ENCODE measurements at regions of chr17 and their contacts with region 1.

Region 1: DNA sequence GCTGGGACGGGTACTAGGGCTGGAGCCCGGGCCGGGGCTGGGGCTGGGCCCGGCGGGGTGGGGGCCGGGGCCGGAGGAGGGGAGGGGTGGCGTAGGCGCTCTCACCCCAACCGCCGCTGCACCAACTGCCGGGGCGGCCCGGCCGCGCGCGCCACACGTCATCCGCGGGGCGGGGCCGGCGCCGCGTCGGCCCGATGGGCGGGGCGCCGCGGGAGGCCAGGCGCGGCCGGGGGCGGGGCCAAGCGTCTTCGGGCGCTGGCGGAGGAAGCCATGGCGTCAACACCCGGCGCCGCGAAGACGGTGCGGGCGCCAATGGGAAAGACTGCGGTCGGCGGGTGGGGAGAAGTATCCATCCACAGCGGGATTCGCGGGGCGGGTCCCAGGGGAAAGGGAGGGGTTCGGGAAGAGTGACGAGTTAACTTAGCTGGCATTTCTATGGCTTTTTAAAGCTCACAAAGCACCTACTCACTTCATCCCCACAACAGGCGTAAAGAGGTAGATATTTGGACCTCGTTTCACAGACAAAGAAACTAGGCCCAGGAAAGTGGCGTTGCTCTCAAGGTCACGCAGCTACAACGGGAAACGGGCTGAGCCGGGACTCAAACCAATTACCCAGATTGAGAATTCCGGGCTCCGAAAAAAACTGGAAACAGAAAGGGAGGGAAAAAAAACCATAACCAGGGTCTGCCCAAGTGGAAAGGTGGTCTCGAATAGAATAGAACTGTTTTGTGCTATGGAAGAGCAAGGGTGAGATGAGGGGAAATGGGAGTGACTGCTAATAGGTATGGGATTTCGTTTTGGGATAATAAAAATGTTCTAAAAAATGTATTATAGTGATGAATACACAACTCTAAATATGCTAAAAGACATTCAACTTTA is at the start of gene SPAG9:
- DNase-seq: peak; percentile 90 to 94 (median 91)
- H3K4me3 ChIP-seq: peak within 1 kb of the TSS; percentile 90 to 91
- H3K4me3 Mint-ChIP-seq: peak within 1 kb of the TSS; percentile 95 to 99 (median 98)
- H3K27ac ChIP-seq: peak within 1 kb of the TSS; percentile 96
- H3K27ac Mint-ChIP-seq: peak within 1 kb of the TSS; percentile 97 to 100 (median 100)
- H3K4me1 ChIP-seq: peaks cover 50% of the 10 kb centered on the region
- H3K4me1 Mint-ChIP-seq: peaks cover 27 to 63% (median 41%) of the 10 kb centered on the region in 4 donors
- H3K27me3 ChIP-seq: no peaks in the 10 kb centered on the region
- H3K27me3 Mint-ChIP-seq: no peaks in the 10 kb centered on the region
- total RNA-seq, gene SPAG9: 62.0 to 62.3 TPM

Region 2: DNA sequence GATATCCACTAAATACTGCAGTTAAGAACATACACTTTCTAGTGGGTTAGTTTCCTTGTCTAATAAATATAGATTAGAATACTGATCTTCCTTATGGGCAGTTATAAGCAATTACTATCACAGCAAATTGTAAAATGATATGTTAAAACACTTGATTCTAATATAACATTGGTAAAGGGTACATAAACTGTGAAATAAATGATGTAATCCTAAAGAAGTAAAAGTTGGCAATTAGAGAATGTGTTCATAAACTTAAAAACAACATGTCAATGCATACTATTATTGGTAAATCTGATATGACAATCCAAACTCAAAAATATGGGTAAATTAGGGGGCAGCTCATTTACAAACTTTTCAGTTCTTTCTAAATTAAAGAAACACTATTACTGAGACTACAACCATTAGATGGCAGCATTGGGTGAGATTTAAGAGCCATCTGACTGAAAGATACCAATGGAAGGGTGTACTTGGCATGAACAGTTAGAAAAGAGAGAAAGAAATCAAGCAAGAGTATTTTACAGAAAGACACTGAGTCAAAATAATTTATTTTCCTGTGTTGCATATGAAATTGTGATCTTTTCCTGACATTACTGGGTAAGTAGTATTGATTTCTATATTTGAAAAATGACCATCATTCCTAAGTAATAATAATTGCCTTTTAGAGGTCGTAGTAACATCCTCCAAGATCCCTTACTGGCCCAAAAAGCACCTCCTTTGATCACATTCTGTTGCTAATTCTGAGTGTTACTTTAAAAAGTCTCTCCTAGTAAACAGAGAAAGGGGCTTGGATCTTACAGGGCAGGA is 119.9 kb before region 1 on chr17:
- CTCF ChIA-PET with region 1: interaction called, 20 read pairs
- POLR2A ChIA-PET with region 1: interaction called, 7 read pairs
- intact Hi-C with region 1: no loop called
- DNase-seq: peak in 4 of 5 donors; percentile 62 to 68 (median 66)
- H3K4me3 ChIP-seq: no peak overlapping the region
- H3K4me3 Mint-ChIP-seq: no peak overlapping the region
- H3K27ac ChIP-seq: no peak overlapping the region
- H3K27ac Mint-ChIP-seq: peak overlapping the region in 2 of 7 donors; percentile 2 to 23
- H3K4me1 ChIP-seq: no peaks in the 10 kb centered on the region
- H3K4me1 Mint-ChIP-seq: peaks cover 0 to 3% (median 1%) of the 10 kb centered on the region in 4 donors
- H3K27me3 ChIP-seq: no peaks in the 10 kb centered on the region
- H3K27me3 Mint-ChIP-seq: no peaks in the 10 kb centered on the region

Region 3: GRCh38 chr17:51029568-51030463 is 91.2 kb before region 1 on chr17:
- CTCF ChIA-PET with region 1: interaction called, 4 read pairs
- POLR2A ChIA-PET with region 1: interaction called, 17 read pairs
- intact Hi-C with region 1: no loop called
- DNase-seq: peak in 4 of 5 donors; percentile 55 to 68 (median 61)
- H3K4me3 ChIP-seq: peak overlapping the region in 1 of 2 donors; percentile 22
- H3K4me3 Mint-ChIP-seq: peak overlapping the region; percentile 69 to 89 (median 82)
- H3K27ac ChIP-seq: peak overlapping the region; percentile 57
- H3K27ac Mint-ChIP-seq: peak overlapping the region; percentile 85 to 98 (median 97)
- H3K4me1 ChIP-seq: peaks cover 27% of the 10 kb centered on the region
- H3K4me1 Mint-ChIP-seq: peaks cover 15 to 32% (median 21%) of the 10 kb centered on the region in 4 donors
- H3K27me3 ChIP-seq: no peaks in the 10 kb centered on the region
- H3K27me3 Mint-ChIP-seq: no peaks in the 10 kb centered on the region

Region 4: GRCh38 chr17:51064061-51064735 is 56.8 kb before region 1 on chr17:
- CTCF ChIA-PET with region 1: no interaction called
- POLR2A ChIA-PET with region 1: interaction called, 6 read pairs
- intact Hi-C with region 1: loop called (anchors 10 kb)
- DNase-seq: no peak
- H3K4me3 ChIP-seq: no peak overlapping the region
- H3K4me3 Mint-ChIP-seq: no peak overlapping the region
- H3K27ac ChIP-seq: no peak overlapping the region
- H3K27ac Mint-ChIP-seq: peak overlapping the region in 2 of 7 donors; percentile 31 to 36
- H3K4me1 ChIP-seq: peaks cover 3% of the 10 kb centered on the region
- H3K4me1 Mint-ChIP-seq: peaks cover 14 to 31% (median 29%) of the 10 kb centered on the region in 4 donors
- H3K27me3 ChIP-seq: no peaks in the 10 kb centered on the region
- H3K27me3 Mint-ChIP-seq: no peaks in the 10 kb centered on the region

Region 5: GRCh38 chr17:51153210-51154072 is 32.5 kb after region 1 on chr17 and contains the start of gene NME1:
- CTCF ChIA-PET with region 1: interaction called, 20 read pairs
- POLR2A ChIA-PET with region 1: interaction called, 47 read pairs
- intact Hi-C with region 1: loop called (anchors 1 kb)
- DNase-seq: peak; percentile 98 to 99 (median 98)
- H3K4me3 ChIP-seq: peak within 1 kb of the TSS; percentile 77 to 85
- H3K4me3 Mint-ChIP-seq: no peak within 1 kb of the TSS
- H3K27ac ChIP-seq: peak within 1 kb of the TSS; percentile 61
- H3K27ac Mint-ChIP-seq: no peak within 1 kb of the TSS
- H3K4me1 ChIP-seq: peaks cover 21% of the 10 kb centered on the region
- H3K4me1 Mint-ChIP-seq: peaks cover 0 to 7% (median 2%) of the 10 kb centered on the region in 4 donors
- H3K27me3 ChIP-seq: no peaks in the 10 kb centered on the region
- H3K27me3 Mint-ChIP-seq: peaks cover 0 to 1% of the 10 kb centered on the region in 2 donors
- total RNA-seq, gene NME1: 10.0 to 12.2 TPM

Region 6: DNA sequence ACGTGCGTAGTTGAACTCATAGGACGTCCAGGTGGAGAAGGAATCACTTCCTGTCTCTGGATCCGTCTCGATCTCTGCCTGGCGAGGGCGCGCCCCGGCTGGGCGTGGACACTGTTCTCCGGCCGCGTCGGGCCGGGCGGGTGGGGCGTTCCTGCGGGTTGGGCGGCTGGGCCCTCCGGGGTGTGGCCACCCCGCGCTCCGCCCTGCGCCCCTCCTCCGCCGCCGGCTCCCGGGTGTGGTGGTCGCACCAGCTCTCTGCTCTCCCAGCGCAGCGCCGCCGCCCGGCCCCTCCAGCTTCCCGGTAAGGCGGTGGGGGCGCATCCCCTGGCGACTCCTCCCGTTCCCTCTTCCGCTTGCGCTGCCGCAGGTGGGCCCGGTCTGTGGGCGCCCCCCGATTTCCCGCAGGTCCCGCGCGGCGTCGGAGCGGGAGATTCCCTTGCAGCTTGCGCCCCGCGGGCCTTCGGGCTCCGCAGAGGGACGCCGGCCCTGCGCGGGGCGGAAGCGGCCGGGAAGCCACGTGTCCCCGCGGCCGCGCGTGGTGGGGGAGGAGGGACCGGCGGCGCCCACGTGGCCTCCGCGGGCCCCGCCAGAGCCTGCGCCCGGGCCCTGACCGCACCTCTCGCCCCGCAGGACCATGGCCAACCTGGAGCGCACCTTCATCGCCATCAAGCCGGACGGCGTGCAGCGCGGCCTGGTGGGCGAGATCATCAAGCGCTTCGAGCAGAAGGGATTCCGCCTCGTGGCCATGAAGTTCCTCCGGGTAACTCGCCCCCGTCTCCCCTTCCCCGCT is 45.4 kb after region 1 on chr17 and contains the start of gene NME2:
- CTCF ChIA-PET with region 1: no interaction called
- POLR2A ChIA-PET with region 1: interaction called, 13 read pairs
- intact Hi-C with region 1: no loop called
- DNase-seq: peak; percentile 51 to 69 (median 59)
- H3K4me3 ChIP-seq: peak within 1 kb of the TSS; percentile 29 to 79
- H3K4me3 Mint-ChIP-seq: peak within 1 kb of the TSS; percentile 89 to 99 (median 97)
- H3K27ac ChIP-seq: peak within 1 kb of the TSS; percentile 61
- H3K27ac Mint-ChIP-seq: peak within 1 kb of the TSS; percentile 94 to 99 (median 98)
- H3K4me1 ChIP-seq: peaks cover 14% of the 10 kb centered on the region
- H3K4me1 Mint-ChIP-seq: peaks cover 15 to 34% (median 23%) of the 10 kb centered on the region in 4 donors
- H3K27me3 ChIP-seq: no peaks in the 10 kb centered on the region
- H3K27me3 Mint-ChIP-seq: no peaks in the 10 kb centered on the region
- total RNA-seq, gene NME2: 134 to 142 TPM

Region 7: DNA sequence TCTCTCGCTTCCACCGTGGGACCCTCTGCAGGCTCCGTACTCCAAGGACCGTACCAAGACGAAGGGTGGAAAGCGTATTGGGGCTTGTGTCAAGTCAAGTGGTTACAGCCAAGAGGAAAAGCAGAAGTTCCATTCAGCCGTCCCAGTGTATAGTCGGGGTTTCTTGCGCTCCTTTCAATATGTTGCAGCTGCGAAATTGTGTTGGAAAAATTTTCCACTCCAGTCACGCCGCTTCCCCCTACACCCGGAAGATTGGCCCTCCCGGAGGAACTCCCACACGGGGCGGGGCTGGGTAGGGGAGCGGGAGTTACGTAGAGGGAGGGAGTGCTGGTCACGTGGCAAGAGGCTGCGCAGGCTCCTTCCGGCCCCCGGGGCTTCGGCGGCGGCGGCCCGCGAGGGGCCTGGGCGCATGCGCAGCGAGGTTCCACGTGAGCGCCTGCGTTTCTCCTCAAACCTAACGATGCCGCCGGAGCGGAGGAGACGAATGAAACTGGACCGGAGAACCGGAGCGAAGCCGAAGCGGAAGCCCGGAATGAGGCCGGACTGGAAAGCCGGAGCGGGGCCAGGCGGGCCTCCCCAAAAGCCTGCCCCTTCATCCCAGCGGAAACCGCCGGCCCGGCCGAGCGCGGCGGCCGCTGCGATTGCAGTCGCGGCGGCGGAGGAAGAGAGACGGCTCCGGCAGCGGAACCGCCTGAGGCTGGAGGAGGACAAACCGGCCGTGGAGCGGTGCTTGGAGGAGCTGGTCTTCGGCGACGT is 139.3 kb after region 1 on chr17 and contains the start of gene UTP18:
- CTCF ChIA-PET with region 1: no interaction called
- POLR2A ChIA-PET with region 1: interaction called, 7 read pairs
- intact Hi-C with region 1: loop called (anchors 1 kb)
- DNase-seq: peak; percentile 96 to 98 (median 97)
- H3K4me3 ChIP-seq: peak within 1 kb of the TSS; percentile 74 to 85
- H3K4me3 Mint-ChIP-seq: peak within 1 kb of the TSS; percentile 91 to 98 (median 96)
- H3K27ac ChIP-seq: peak within 1 kb of the TSS; percentile 97
- H3K27ac Mint-ChIP-seq: peak within 1 kb of the TSS; percentile 96 to 99 (median 99)
- H3K4me1 ChIP-seq: peaks cover 72% of the 10 kb centered on the region
- H3K4me1 Mint-ChIP-seq: peaks cover 42 to 84% (median 58%) of the 10 kb centered on the region in 4 donors
- H3K27me3 ChIP-seq: no peaks in the 10 kb centered on the region
- H3K27me3 Mint-ChIP-seq: no peaks in the 10 kb centered on the region
- total RNA-seq, gene UTP18: 44.0 to 44.1 TPM